ENCODE measurements at regions of chr9 and their contacts with region 1.

Region 1: GRCh38 chr9:121321016-121321503 is 49.0 kb downstream of the STOM start:
- DNase-seq: no peak
- ATAC-seq: no peak
- H3K4me3 ChIP-seq: no peak overlapping the region
- H3K27ac ChIP-seq: no peak overlapping the region
- H3K4me1 ChIP-seq: peaks cover 0 to 7% of the 10 kb centered on the region in 2 experiments; a peak in 2 of 5 replicates
- H3K27me3 ChIP-seq: no peaks in the 10 kb centered on the region
- CTCF ChIP-seq: no peak
- EP300 ChIP-seq: no peak
- POLR2A ChIP-seq: no peak
- RAD21 ChIP-seq: no peak

Region 2: GRCh38 chr9:121246821-121247561 is 74.1 kb before region 1 on chr9:
- CTCF ChIA-PET with region 1: no interaction called
- POLR2A ChIA-PET with region 1: no interaction called
- in situ Hi-C with region 1: no loop called
- intact Hi-C with region 1: no loop called
- DNase-seq: peak in 2 of 4 experiments; percentile 16 to 36
- ATAC-seq: peak; percentile 57
- H3K4me3 ChIP-seq: no peak overlapping the region
- H3K27ac ChIP-seq: no peak overlapping the region; the same call in 2 of the 3 replicates
- H3K4me1 ChIP-seq: peaks cover 9 to 10% of the 10 kb centered on the region in 2 experiments; a peak in 4 of 5 replicates
- H3K27me3 ChIP-seq: no peaks in the 10 kb centered on the region
- CTCF ChIP-seq: no peak
- EP300 ChIP-seq: no peak
- POLR2A ChIP-seq: no peak
- RAD21 ChIP-seq: no peak

Region 3: GRCh38 chr9:121344184-121344583 is 23.1 kb after region 1 on chr9:
- CTCF ChIA-PET with region 1: no interaction called
- POLR2A ChIA-PET with region 1: no interaction called
- in situ Hi-C with region 1: no loop called
- intact Hi-C with region 1: no loop called
- DNase-seq: no peak
- ATAC-seq: no peak
- H3K4me3 ChIP-seq: no peak overlapping the region
- H3K27ac ChIP-seq: no peak overlapping the region
- H3K4me1 ChIP-seq: no peaks in the 10 kb centered on the region
- H3K27me3 ChIP-seq: no peaks in the 10 kb centered on the region
- CTCF ChIP-seq: no peak
- EP300 ChIP-seq: no peak
- POLR2A ChIP-seq: no peak
- RAD21 ChIP-seq: no peak

Region 4: GRCh38 chr9:121369595-121370265 is 48.7 kb after region 1 on chr9 and contains the start of gene STOM:
- CTCF ChIA-PET with region 1: interaction called, 5 read pairs
- POLR2A ChIA-PET with region 1: interaction called, 3 read pairs
- in situ Hi-C with region 1: no loop called
- intact Hi-C with region 1: loop called (anchors 2 kb)
- DNase-seq: peak in 1 of 4 experiments; percentile 10
- ATAC-seq: peak; percentile 73
- H3K4me3 ChIP-seq: peak within 1 kb of the TSS; percentile 77
- H3K27ac ChIP-seq: peak within 1 kb of the TSS; percentile 99
- H3K4me1 ChIP-seq: peaks cover 18 to 33% of the 10 kb centered on the region in 2 experiments
- H3K27me3 ChIP-seq: no peaks in the 10 kb centered on the region
- CTCF ChIP-seq: no peak
- EP300 ChIP-seq: no peak
- POLR2A ChIP-seq: peak; percentile 86; the same call in 1 of the 2 replicates
- RAD21 ChIP-seq: no peak
- polyA plus RNA-seq, gene STOM: 24.6 to 35.8 TPM

Region 5: GRCh38 chr9:121376214-121376830 is 55.3 kb after region 1 on chr9:
- CTCF ChIA-PET with region 1: interaction called, 32 read pairs
- POLR2A ChIA-PET with region 1: interaction called, 3 read pairs
- in situ Hi-C with region 1: no loop called
- intact Hi-C with region 1: loop called (anchors 1 kb)
- DNase-seq: no peak
- ATAC-seq: no peak
- H3K4me3 ChIP-seq: no peak overlapping the region
- H3K27ac ChIP-seq: no peak overlapping the region
- H3K4me1 ChIP-seq: peaks cover 3 to 24% of the 10 kb centered on the region in 2 experiments; a peak in 4 of 5 replicates
- H3K27me3 ChIP-seq: no peaks in the 10 kb centered on the region
- CTCF ChIP-seq: peak in 2 of 3 experiments; percentile 11 to 33; a peak in 3 of 6 replicates
- EP300 ChIP-seq: no peak
- POLR2A ChIP-seq: no peak
- RAD21 ChIP-seq: peak; percentile 20 to 45; a peak in 2 of 4 replicates

Region 6: GRCh38 chr9:121519046-121519445 is 198.0 kb after region 1 on chr9:
- CTCF ChIA-PET with region 1: no interaction called
- POLR2A ChIA-PET with region 1: no interaction called
- in situ Hi-C with region 1: no loop called
- intact Hi-C with region 1: no loop called
- DNase-seq: no peak
- ATAC-seq: no peak
- H3K4me3 ChIP-seq: no peak overlapping the region
- H3K27ac ChIP-seq: no peak overlapping the region
- H3K4me1 ChIP-seq: no peaks in the 10 kb centered on the region
- H3K27me3 ChIP-seq: no peaks in the 10 kb centered on the region
- CTCF ChIP-seq: no peak
- EP300 ChIP-seq: no peak
- POLR2A ChIP-seq: no peak
- RAD21 ChIP-seq: no peak

Measured in K562 (cell line).